Ascending aorta (tissue), 2 donors: ENCODE measurements at regions of chr19 and their contacts with region 1.

Region 1: GRCh38 chr19:33373701-33374421 is at the start of gene CEBPG:
- DNase-seq: no peak
- H3K4me3 ChIP-seq: peak within 1 kb of the TSS; percentile 87
- H3K27ac ChIP-seq: peak within 1 kb of the TSS; percentile 96 to 97
- H3K4me1 ChIP-seq: peaks cover 0 to 19% of the 10 kb centered on the region in 2 donors
- H3K27me3 ChIP-seq: no peaks in the 10 kb centered on the region
- CTCF ChIP-seq: peak in 1 of 3 experiments; percentile 28
- total RNA-seq, gene CEBPG: 21.9 TPM

Region 2: GRCh38 chr19:33521480-33522370 is 147.9 kb after region 1 on chr19 and contains the start of gene PEPD:
- intact Hi-C with region 1: loop called (anchors 1 kb)
- DNase-seq: peak; percentile 60 to 95
- H3K4me3 ChIP-seq: peak within 1 kb of the TSS; percentile 60 to 89
- H3K27ac ChIP-seq: peak within 1 kb of the TSS in 1 of 2 donors; percentile 4
- H3K4me1 ChIP-seq: peaks cover 4 to 7% of the 10 kb centered on the region in 2 donors
- H3K27me3 ChIP-seq: no peaks in the 10 kb centered on the region
- CTCF ChIP-seq: no peak
- total RNA-seq, gene PEPD: 112 TPM